ENCODE measurements at regions of chr21 and their contacts with region 1.

Region 1: GRCh38 chr21:17598437-17598836 is 14.3 kb downstream of the BTG3 start:
- DNase-seq: no peak
- ATAC-seq: no peak
- H3K4me3 ChIP-seq: no peak overlapping the region
- H3K27ac ChIP-seq: no peak overlapping the region
- H3K4me1 ChIP-seq: no peaks in the 10 kb centered on the region
- H3K27me3 ChIP-seq: no peaks in the 10 kb centered on the region
- CTCF ChIP-seq: no peak
- EP300 ChIP-seq: no peak
- POLR2A ChIP-seq: no peak
- RAD21 ChIP-seq: no peak

Region 2: DNA sequence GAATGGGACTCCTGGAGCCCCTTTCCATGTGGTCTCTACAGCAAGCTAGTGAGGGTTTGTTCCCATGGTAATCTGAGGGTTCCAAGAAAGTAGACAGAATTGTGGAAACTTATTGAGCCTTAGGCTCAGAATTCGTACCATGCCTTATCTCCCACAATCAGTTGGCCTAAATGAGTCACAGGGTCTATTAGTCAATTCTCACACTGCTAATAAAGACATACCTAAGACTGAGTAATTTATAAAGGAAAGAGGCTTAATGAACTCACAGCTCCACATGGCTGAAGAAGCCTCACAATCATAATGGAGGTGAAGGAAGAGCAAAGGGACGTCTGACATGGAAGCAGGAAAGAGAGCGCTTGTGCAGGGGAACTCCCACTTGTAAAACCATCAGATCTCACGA is 192.2 kb before region 1 on chr21:
- CTCF ChIA-PET with region 1: no interaction called
- POLR2A ChIA-PET with region 1: no interaction called
- in situ Hi-C with region 1: no loop called
- intact Hi-C with region 1: no loop called
- DNase-seq: no peak
- ATAC-seq: no peak
- H3K4me3 ChIP-seq: no peak overlapping the region
- H3K27ac ChIP-seq: no peak overlapping the region
- H3K4me1 ChIP-seq: no peaks in the 10 kb centered on the region
- H3K27me3 ChIP-seq: no peaks in the 10 kb centered on the region
- CTCF ChIP-seq: no peak
- EP300 ChIP-seq: no peak
- POLR2A ChIP-seq: no peak
- RAD21 ChIP-seq: no peak

Region 3: GRCh38 chr21:17611414-17612022 is 13.1 kb after region 1 on chr21:
- CTCF ChIA-PET with region 1: no interaction called
- POLR2A ChIA-PET with region 1: interaction called, 31 read pairs
- in situ Hi-C with region 1: no loop called
- intact Hi-C with region 1: no loop called
- DNase-seq: peak; percentile 43 to 93 (median 63)
- ATAC-seq: peak; percentile 81
- H3K4me3 ChIP-seq: peak overlapping the region; percentile 93
- H3K27ac ChIP-seq: peak overlapping the region; percentile 97
- H3K4me1 ChIP-seq: peaks cover 2 to 15% of the 10 kb centered on the region in 2 experiments; a peak in 4 of 5 replicates
- H3K27me3 ChIP-seq: no peaks in the 10 kb centered on the region
- CTCF ChIP-seq: no peak
- EP300 ChIP-seq: no peak
- POLR2A ChIP-seq: peak; percentile 78
- RAD21 ChIP-seq: no peak